GM12878 (cell line): ENCODE measurements at regions of chr6 and their contacts with region 1.

Region 1: GRCh38 chr6:12051861-12052368 is 39.8 kb downstream of the HIVEP1 start:
- DNase-seq: peak; percentile 92
- ATAC-seq: peak; percentile 76
- H3K4me3 ChIP-seq: 0 out of 2 replicates have a peak overlapping the region, but pooled peaks have one; percentile 11
- H3K27ac ChIP-seq: peak overlapping the region; percentile 98
- H3K4me1 ChIP-seq: peaks cover 47% of the 10 kb centered on the region
- H3K27me3 ChIP-seq: no peaks in the 10 kb centered on the region
- CTCF ChIP-seq: peak in 1 of 3 experiments; percentile 6; a peak in 1 of 6 replicates
- EP300 ChIP-seq: peak; percentile 95 to 98
- POLR2A ChIP-seq: no peak
- RAD21 ChIP-seq: 0 out of 2 replicates have a peak, but pooled peaks have one; percentile 7

Region 2: GRCh38 chr6:11824986-11825385 is 226.9 kb before region 1 on chr6:
- CTCF ChIA-PET with region 1: no interaction called
- POLR2A ChIA-PET with region 1: no interaction called
- RAD21 ChIA-PET with region 1: interaction called, 3 read pairs
- SMC1A ChIA-PET with region 1: interaction called, 8 read pairs
- in situ Hi-C with region 1: no loop called
- intact Hi-C with region 1: loop called (anchors 2 kb)
- DNase-seq: peak; percentile 91
- ATAC-seq: peak; percentile 86
- H3K4me3 ChIP-seq: no peak overlapping the region
- H3K27ac ChIP-seq: peak overlapping the region; percentile 70
- H3K4me1 ChIP-seq: peaks cover 47% of the 10 kb centered on the region
- H3K27me3 ChIP-seq: no peaks in the 10 kb centered on the region
- CTCF ChIP-seq: no peak
- EP300 ChIP-seq: peak; percentile 90; a peak in 3 of 4 replicates
- POLR2A ChIP-seq: no peak
- RAD21 ChIP-seq: peak; percentile 14

Region 3: GRCh38 chr6:11833626-11834592 is 218.0 kb before region 1 on chr6:
- CTCF ChIA-PET with region 1: no interaction called
- POLR2A ChIA-PET with region 1: no interaction called
- RAD21 ChIA-PET with region 1: no interaction called
- SMC1A ChIA-PET with region 1: interaction called, 6 read pairs
- in situ Hi-C with region 1: no loop called
- intact Hi-C with region 1: loop called (anchors 2 kb)
- DNase-seq: peak; percentile 84
- ATAC-seq: peak; percentile 84
- H3K4me3 ChIP-seq: peak overlapping the region; percentile 0; the same call in 1 of the 2 replicates
- H3K27ac ChIP-seq: peak overlapping the region; percentile 95
- H3K4me1 ChIP-seq: peaks cover 45% of the 10 kb centered on the region
- H3K27me3 ChIP-seq: no peaks in the 10 kb centered on the region
- CTCF ChIP-seq: no peak
- EP300 ChIP-seq: peak; percentile 97 to 100
- POLR2A ChIP-seq: peak; percentile 41; the same call in 1 of the 2 replicates
- RAD21 ChIP-seq: peak; percentile 42; the same call in 1 of the 2 replicates